ENCODE measurements at regions of chr7 and their contacts with region 1.

Region 1: GRCh38 chr7:106041140-106041717 is 70.9 kb downstream of the SYPL1 start:
- DNase-seq: peak; percentile 42 to 60
- H3K4me3 ChIP-seq: no peak overlapping the region
- H3K27ac ChIP-seq: no peak overlapping the region
- H3K4me1 ChIP-seq: peaks cover 12 to 29% (median 20%) of the 10 kb centered on the region in 4 donors
- H3K27me3 ChIP-seq: peaks cover 0 to 5% (median 0%) of the 10 kb centered on the region in 3 donors
- CTCF ChIP-seq: peak in 5 of 7 experiments; percentile 52 to 76 (median 72)
- EP300 ChIP-seq: no peak
- POLR2A ChIP-seq: no peak

Region 2: DNA sequence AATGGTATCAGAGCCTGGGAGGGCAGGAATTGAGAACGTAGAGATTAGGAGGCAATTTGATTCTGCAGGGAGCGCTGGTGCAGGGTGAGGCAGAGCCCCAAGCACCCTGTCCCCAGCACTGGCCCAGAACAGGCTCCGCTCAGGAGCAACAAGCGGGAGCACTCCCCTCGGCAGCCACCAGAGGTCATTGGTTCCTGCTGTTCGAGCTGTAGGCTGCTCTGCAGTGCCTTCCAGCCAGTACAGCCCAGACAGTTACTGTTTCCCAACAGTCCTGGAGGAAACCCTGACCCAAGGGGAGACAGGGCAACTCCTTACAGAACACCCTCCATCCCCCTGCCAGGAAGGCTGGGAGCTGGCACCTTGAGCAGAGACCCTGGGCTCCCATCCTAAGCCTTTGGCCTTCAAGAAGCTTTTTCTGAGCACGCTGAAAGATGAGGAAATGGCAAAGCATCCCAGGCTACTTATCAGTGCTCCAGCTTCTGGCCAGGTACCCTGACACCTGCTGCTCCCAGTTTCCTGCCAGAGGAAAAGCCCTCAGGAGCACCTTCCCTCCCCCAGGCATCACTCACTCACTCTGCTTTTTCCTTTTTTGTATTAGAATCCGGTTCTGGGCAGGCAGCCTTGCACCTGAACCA is 388.8 kb before region 1 on chr7:
- intact Hi-C with region 1: loop called (anchors 10 kb)
- DNase-seq: peak; percentile 87 to 92
- H3K4me3 ChIP-seq: no peak overlapping the region
- H3K27ac ChIP-seq: peak overlapping the region in 1 of 5 donors; percentile 47
- H3K4me1 ChIP-seq: peaks cover 28 to 70% (median 58%) of the 10 kb centered on the region in 4 donors
- H3K27me3 ChIP-seq: no peaks in the 10 kb centered on the region
- CTCF ChIP-seq: peak in 5 of 7 experiments; percentile 74 to 89 (median 79)
- EP300 ChIP-seq: no peak
- POLR2A ChIP-seq: no peak

Region 3: DNA sequence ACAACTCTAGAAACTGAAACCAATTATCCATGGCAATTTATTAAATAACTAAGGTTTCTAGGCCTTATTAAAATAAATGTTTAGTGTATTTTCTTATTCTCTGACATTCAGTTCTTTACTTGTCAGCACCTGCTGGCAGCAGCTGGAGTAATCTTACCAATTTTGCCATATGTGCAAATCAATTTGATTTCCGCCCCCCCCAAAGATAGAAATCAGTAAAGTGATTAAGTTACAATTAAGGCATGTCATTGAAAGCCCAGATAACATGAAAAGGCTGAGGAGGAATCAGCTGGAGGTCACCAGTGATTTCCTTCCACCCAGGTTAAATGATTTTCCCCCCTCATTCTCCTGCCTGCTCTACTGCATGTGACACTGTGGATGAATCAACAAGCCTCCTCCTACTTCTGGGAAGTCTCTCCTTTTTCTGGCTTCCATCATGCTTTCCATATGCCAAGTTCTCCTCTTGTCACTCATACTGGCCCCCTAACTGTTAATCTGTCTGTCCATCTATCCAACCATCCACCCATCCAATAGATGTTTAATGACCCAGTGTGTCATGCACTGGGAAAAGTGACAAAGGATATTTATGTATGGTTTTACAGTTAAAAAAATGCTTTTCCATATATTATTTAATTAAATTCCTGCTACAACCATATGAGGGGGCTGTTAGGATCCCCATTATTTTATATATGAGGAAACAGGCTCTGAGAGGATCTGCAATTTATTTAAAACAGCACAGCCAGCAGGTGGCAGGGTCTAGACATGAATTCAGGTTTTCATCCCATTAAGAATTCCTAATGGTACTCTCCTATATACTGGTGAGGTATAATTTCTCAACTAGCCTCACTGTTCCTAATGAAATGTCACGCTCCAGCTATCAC is 281.3 kb before region 1 on chr7:
- intact Hi-C with region 1: loop called (anchors 10 kb)
- DNase-seq: peak; percentile 49 to 73
- H3K4me3 ChIP-seq: no peak overlapping the region
- H3K27ac ChIP-seq: peak overlapping the region in 1 of 5 donors; percentile 26
- H3K4me1 ChIP-seq: peaks cover 0 to 18% (median 10%) of the 10 kb centered on the region in 4 donors
- H3K27me3 ChIP-seq: no peaks in the 10 kb centered on the region
- CTCF ChIP-seq: peak in 5 of 7 experiments; percentile 13 to 62 (median 51)
- EP300 ChIP-seq: no peak
- POLR2A ChIP-seq: no peak

Region 4: DNA sequence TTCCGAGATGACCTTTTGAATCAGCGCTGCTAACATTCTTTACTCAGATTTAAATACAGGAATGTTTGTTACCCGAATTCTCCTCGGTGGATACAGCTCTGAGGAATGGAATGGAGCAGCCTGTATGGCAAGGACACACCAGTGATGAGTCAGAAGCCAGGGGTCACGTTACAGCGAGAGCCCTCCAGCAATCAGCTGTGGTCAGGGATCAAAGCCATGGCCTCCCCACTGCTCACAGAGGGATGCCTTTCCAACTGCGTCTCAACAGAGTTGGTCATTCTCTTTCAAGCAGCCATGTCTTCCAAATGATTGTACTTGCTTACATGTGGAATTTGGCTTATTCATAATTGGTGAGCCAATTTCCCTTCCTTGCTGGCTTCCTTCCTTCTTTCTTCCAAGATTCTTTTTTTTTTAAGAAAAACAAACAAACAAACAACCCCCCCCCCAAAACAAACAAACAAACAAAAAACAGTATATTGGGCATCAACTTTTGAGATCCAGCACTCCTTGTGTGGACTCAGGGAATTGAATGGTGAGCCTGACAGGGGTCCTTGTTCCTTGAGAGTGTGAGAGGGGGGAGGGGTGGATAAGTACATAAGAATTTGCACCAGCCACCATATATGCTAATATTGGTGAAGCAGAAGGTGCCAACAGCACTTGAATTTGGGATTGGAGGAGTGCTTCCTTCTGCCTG is 265.0 kb before region 1 on chr7:
- intact Hi-C with region 1: no loop called
- DNase-seq: peak; percentile 34 to 35
- H3K4me3 ChIP-seq: no peak overlapping the region
- H3K27ac ChIP-seq: peak overlapping the region in 3 of 5 donors; percentile 55 to 60 (median 58)
- H3K4me1 ChIP-seq: peaks cover 0 to 28% (median 17%) of the 10 kb centered on the region in 4 donors
- H3K27me3 ChIP-seq: no peaks in the 10 kb centered on the region
- CTCF ChIP-seq: no peak
- EP300 ChIP-seq: no peak
- POLR2A ChIP-seq: no peak

Region 5: DNA sequence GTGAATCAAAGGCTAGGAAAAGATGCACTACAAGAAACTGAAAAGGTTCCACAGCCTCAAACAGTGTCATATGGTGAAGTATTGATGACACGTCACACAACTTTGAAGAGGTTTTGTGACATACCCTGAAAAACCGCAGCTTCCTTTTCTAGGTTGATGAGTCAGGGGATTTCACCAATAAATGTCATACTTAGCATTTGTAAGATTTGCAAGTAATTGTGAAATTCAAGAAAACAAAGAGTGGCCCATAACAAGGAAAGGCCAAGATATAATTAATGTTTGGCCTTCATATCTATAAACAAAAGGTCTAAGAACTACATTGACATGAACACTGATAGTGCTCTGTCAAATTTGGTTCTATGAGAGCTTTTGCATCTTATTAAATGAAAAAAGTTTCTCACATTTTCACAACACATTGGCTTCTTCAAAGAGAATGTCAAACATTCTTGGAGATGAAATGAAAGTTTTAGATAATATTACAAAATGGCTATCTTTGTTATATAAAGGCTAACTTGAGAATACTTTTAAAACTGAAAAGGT is 305.5 kb after region 1 on chr7:
- intact Hi-C with region 1: no loop called
- DNase-seq: peak in 1 of 2 donors; percentile 49
- H3K4me3 ChIP-seq: no peak overlapping the region
- H3K27ac ChIP-seq: peak overlapping the region in 2 of 5 donors; percentile 54 to 61
- H3K4me1 ChIP-seq: no peaks in the 10 kb centered on the region
- H3K27me3 ChIP-seq: no peaks in the 10 kb centered on the region
- CTCF ChIP-seq: no peak
- EP300 ChIP-seq: no peak
- POLR2A ChIP-seq: no peak

Measured in stomach (tissue), 19 donors.